Activated naive CD8-positive, alpha-beta T cell treated with anti-CD3 and anti-CD28 coated beads, Interleukin-2, amount 10 ng/mL, durations not matched to agents 7 days and 5 days (primary cell): ENCODE measurements at regions of chr6 and their contacts with region 1.

Region 1: DNA sequence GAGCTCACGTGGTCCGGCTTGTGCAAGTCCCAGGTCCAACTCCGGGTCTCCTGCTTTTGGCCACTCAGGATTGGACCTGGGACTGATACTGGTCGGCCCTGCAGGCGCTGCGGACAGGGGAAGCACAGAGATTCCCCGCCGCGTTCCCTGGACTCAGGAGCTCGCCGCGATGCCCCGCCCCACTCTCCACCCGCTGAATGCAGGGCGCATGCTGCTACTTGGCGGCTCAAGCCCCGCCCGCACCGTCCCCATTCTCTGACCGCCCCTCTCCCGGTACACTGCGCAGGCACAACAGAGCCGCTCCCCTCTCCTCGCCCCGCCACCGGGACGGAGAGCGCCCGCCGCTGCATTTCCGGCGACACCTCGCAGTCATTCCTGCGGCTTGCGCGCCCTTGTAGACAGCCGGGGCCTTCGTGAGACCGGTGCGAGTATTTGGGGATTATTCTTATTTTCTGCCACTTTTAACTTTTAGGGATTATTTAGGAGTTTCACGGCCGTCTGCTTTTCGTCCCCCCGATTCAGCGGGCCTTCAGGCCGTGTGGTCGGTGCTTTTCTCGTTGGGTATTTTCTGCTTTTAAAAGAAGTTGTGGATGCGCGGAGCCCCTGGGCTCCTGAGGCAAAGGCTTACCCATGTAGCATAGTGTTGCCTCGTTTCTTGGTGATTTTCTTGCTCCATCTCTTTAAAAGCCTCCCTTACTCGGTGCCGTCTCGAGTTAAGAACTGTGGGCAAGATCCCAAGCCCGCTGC is at the start of gene TMEM14C:
- DNase-seq: peak; percentile 84
- ATAC-seq: peak; percentile 89
- H3K4me3 Mint-ChIP-seq: peak within 1 kb of the TSS; percentile 92
- H3K27ac Mint-ChIP-seq: peak within 1 kb of the TSS; percentile 96
- H3K4me1 Mint-ChIP-seq: peaks cover 34% of the 10 kb centered on the region
- H3K27me3 Mint-ChIP-seq: no peaks in the 10 kb centered on the region
- total RNA-seq, gene TMEM14C: 41.5 to 44.2 TPM

Region 2: DNA sequence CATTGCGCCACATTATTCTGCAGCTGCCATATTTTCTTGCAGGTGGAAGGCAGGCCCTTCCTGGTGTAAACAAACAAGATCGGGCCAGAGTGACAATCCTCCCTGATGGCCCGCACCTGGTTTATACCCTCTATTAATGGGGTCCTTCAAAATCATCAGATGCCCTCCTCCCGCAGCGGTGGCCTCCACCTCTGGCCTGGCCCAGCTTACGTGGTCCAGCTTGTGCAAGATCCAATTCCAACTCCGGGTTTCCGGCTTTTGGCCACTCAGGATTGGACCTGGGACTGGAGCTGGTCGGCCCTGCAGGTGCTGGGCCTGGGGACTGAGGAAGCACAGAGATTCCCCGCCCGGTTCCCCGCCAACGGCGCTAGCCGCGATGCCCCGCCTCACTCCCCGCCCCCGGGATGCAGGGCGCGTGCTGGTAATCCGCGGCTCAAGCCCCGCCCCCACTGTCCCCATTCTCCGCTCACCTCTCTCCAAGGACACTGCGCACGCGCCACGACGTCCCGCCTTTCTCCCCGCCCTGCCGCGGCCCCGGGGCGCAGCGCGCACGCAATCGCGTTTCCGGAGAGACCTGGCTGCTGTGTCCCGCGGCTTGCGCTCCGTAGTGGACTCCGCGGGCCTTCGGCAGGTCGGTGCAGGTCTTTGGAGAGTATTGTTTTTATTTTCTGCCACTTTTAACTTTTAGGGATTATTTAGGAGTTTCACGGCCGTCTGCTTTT is 24.4 kb after region 1 on chr6 and contains the start of gene TMEM14B:
- POLR2A ChIA-PET with region 1: interaction called, 42 read pairs
- DNase-seq: peak; percentile 100
- ATAC-seq: peak; percentile 98
- H3K4me3 Mint-ChIP-seq: peak within 1 kb of the TSS; percentile 97
- H3K27ac Mint-ChIP-seq: peak within 1 kb of the TSS; percentile 86
- H3K4me1 Mint-ChIP-seq: peaks cover 33% of the 10 kb centered on the region
- H3K27me3 Mint-ChIP-seq: no peaks in the 10 kb centered on the region
- total RNA-seq, gene TMEM14B: 81.6 to 90.7 TPM